ENCODE measurements at regions of chr20 and their contacts with region 1.

Region 1: GRCh38 chr20:56392282-56393137 is at the start of gene CSTF1:
- DNase-seq: peak; percentile 98 to 99 (median 99)
- ATAC-seq: peak; percentile 84
- H3K4me3 ChIP-seq: peak within 1 kb of the TSS; percentile 91
- H3K4me3 Mint-ChIP-seq: no peak within 1 kb of the TSS
- H3K27ac ChIP-seq: peak within 1 kb of the TSS; percentile 95 to 97
- H3K27ac Mint-ChIP-seq: no peak within 1 kb of the TSS
- H3K4me1 ChIP-seq: peaks cover 17% of the 10 kb centered on the region
- H3K4me1 Mint-ChIP-seq: peaks cover 27% of the 10 kb centered on the region
- H3K27me3 ChIP-seq: no peaks in the 10 kb centered on the region
- H3K27me3 Mint-ChIP-seq: no peaks in the 10 kb centered on the region
- CTCF ChIP-seq: no peak
- total RNA-seq, gene CSTF1: 20.7 to 26.0 TPM

Region 2: DNA sequence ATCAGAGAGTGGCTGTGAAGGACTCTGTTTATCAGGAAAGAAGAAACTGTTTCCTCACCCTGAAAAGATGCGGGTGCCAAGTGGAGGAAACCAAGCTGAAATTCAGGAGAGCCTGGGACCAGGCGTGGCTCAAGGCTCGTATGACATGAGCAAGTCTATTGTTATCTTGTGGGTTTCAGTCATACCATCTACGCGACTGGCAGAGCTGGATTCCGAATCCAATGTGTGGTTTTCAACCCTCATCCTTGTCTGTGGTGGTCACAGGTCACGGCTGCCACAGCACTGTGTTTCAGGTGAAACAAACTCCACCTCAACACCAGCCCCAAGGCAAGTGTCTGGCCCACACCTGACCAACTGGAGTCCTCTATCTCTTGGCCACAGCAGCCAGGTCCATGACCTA is 134.9 kb before region 1 on chr20:
- CTCF ChIA-PET with region 1: no interaction called
- POLR2A ChIA-PET with region 1: no interaction called
- intact Hi-C with region 1: no loop called
- DNase-seq: no peak
- ATAC-seq: no peak
- H3K4me3 ChIP-seq: no peak overlapping the region
- H3K4me3 Mint-ChIP-seq: no peak overlapping the region
- H3K27ac ChIP-seq: no peak overlapping the region
- H3K27ac Mint-ChIP-seq: no peak overlapping the region
- H3K4me1 ChIP-seq: no peaks in the 10 kb centered on the region
- H3K4me1 Mint-ChIP-seq: no peaks in the 10 kb centered on the region
- H3K27me3 ChIP-seq: no peaks in the 10 kb centered on the region
- H3K27me3 Mint-ChIP-seq: peaks cover 10% of the 10 kb centered on the region
- CTCF ChIP-seq: no peak

Region 3: GRCh38 chr20:56358596-56359211 is 33.8 kb before region 1 on chr20 and contains the start of gene FAM210B:
- CTCF ChIA-PET with region 1: interaction called, 3 read pairs
- POLR2A ChIA-PET with region 1: interaction called, 21 read pairs
- intact Hi-C with region 1: loop called (anchors 1 kb)
- DNase-seq: peak; percentile 60 to 93 (median 79)
- ATAC-seq: peak; percentile 99
- H3K4me3 ChIP-seq: peak within 1 kb of the TSS; percentile 64 to 80
- H3K4me3 Mint-ChIP-seq: peak within 1 kb of the TSS; percentile 89
- H3K27ac ChIP-seq: peak within 1 kb of the TSS; percentile 22 to 40
- H3K27ac Mint-ChIP-seq: peak within 1 kb of the TSS; percentile 66
- H3K4me1 ChIP-seq: peaks cover 8% of the 10 kb centered on the region
- H3K4me1 Mint-ChIP-seq: peaks cover 22% of the 10 kb centered on the region
- H3K27me3 ChIP-seq: no peaks in the 10 kb centered on the region
- H3K27me3 Mint-ChIP-seq: no peaks in the 10 kb centered on the region
- CTCF ChIP-seq: no peak
- total RNA-seq, gene FAM210B: 10.8 to 12.1 TPM

Region 4: DNA sequence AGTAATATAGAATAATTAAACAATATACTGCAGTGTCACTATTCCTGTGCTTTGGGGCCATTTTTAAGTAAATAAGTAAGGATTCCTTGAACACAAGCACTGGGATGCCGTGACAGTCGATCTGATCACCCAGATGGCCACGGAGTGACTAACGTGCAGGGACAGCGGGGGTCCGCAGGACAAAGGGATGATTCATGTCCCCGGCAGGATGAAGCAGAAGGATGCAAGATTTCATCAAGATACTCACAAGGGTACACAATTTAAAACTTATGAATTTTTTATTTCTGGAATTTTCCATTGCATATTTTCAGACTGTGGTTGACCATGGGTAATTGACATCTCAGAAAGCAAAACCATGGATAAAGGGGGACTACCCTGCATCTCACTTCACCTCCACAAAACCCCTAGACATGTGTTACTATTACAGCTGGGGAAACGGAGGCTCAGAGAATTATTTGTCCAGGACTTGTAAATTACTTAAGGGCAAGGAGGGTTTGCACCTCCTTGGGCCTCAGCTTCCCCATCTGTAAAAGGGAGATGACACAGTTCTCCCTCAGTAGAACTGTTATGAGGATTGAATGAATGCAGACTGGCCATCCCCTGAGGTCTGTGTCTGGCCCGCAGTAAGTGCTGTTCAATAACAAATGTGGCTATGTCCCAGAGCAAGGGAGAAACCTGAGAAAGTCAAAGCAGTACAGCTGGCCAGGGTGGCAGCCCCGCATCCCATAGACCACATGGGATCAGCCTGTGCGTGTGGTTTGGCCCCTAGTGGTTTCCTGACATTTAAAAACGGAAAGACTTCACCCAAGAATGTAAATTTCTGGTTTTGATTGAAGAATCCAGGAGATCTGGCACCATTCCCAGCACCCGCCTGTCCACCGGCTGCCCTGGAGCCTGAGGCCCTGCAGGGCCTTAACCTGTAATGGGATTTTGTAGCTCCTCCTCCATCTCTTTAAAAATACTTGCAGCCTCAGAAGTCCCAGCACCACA is 638.4 kb after region 1 on chr20:
- CTCF ChIA-PET with region 1: no interaction called
- POLR2A ChIA-PET with region 1: no interaction called
- intact Hi-C with region 1: no loop called
- DNase-seq: no peak
- ATAC-seq: no peak
- H3K4me3 ChIP-seq: no peak overlapping the region
- H3K4me3 Mint-ChIP-seq: no peak overlapping the region
- H3K27ac ChIP-seq: no peak overlapping the region
- H3K27ac Mint-ChIP-seq: no peak overlapping the region
- H3K4me1 ChIP-seq: no peaks in the 10 kb centered on the region
- H3K4me1 Mint-ChIP-seq: no peaks in the 10 kb centered on the region
- H3K27me3 ChIP-seq: peaks cover 0 to 4% of the 10 kb centered on the region in 2 experiments
- H3K27me3 Mint-ChIP-seq: peaks cover 14% of the 10 kb centered on the region
- CTCF ChIP-seq: no peak

Measured in CD8-positive, alpha-beta T cell (primary cell).